Prostate gland (tissue), 2 donors: ENCODE measurements at regions of chr17 and their contacts with region 1.

Region 1: GRCh38 chr17:46212634-46213435 is 19.6 kb upstream of the KANSL1 start:
- DNase-seq: peak; percentile 73
- H3K4me3 ChIP-seq: no peak overlapping the region
- H3K27ac ChIP-seq: no peak overlapping the region
- H3K4me1 ChIP-seq: no peaks in the 10 kb centered on the region
- H3K27me3 ChIP-seq: no peaks in the 10 kb centered on the region
- CTCF ChIP-seq: peak; percentile 38 to 87 (median 78)
- POLR2A ChIP-seq: no peak

Region 2: GRCh38 chr17:46002311-46002972 is 210.4 kb before region 1 on chr17:
- intact Hi-C with region 1: loop called (anchors 2 kb)
- DNase-seq: peak; percentile 68
- H3K4me3 ChIP-seq: no peak overlapping the region
- H3K27ac ChIP-seq: no peak overlapping the region
- H3K4me1 ChIP-seq: peaks cover 6% of the 10 kb centered on the region
- H3K27me3 ChIP-seq: no peaks in the 10 kb centered on the region
- CTCF ChIP-seq: peak; percentile 95 to 97 (median 96)
- POLR2A ChIP-seq: no peak

Region 3: DNA sequence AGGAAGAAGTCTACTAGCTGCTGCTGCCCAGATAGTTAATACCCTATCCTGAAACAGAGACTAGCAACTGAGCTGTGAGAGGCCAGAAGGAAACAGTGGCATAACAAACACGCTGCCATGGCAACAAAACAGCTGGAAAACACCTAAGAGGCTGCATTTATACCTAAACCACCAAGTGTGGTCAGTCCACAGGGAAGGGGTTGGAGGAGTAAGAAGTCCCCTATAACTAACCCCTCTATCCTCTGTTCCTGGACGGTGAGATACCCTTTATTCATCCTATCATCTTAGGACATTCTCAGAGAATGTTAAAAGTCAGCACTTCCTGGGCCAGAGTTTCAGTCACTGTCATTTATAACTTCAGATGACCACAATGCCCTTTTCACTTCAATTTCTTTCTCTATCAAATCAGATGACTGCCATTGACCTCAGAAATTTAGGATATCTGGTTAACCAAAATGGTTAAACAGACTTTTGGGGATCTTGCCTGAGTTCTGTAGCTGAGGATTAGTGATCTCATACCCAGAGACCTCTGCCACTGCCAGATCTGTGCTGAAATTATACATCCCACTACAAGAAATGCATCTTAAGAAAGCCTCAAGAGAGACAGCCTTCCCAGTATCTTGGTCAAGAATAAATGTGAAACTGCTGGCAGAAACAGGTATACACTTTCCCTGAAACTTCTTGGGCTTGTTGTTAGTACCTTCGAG is 177.6 kb before region 1 on chr17:
- intact Hi-C with region 1: loop called (anchors 5 kb)
- DNase-seq: no peak
- H3K4me3 ChIP-seq: no peak overlapping the region
- H3K27ac ChIP-seq: no peak overlapping the region
- H3K4me1 ChIP-seq: peaks cover 3% of the 10 kb centered on the region
- H3K27me3 ChIP-seq: no peaks in the 10 kb centered on the region
- CTCF ChIP-seq: no peak
- POLR2A ChIP-seq: no peak